ENCODE measurements at regions of chr6 and their contacts with region 1.

Region 1: DNA sequence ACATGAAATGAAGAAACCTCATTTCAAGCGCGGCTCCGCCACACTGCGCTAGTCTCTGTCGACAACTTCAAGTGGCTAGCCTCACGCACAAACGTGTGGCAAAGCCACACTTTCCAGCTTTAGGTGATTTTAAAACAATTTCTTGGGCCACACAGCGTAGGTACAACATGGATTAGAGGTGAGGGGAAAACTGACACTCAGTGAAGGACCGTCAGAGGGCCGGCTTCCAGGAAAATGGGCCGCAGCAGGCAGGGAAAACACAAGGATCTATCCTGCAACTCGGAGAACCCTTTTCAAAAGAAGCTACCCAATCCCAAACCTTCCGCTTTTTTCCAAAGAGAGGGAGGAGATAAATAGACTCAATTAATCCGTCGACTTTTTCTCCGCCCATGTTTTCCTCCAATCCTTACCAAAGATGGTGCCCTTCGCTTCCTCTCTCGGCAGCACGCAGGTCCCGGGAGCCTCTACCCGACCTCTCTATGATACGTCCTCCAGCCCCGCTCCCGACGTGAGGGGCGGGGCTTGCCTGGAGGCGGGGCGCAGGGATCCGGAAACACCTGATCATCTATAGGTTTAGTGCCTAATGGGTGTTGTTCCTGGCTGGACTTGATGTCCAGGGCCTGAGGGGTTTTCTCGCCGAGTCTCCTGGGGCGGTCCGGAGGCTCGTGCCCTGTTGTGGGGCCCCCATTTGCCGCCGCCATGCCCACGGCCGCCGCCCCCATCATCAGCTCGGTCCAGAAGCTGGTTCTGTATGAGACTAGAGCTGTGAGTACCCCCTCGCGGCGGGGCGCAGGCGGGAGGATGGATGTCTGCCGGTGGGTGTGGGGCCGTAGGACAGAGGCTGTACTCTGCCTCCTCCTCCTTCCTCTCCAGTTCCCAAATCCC is at the starts of genes AK9 and FIG4:
- DNase-seq: peak; percentile 72 to 88 (median 83)
- ATAC-seq: peak; percentile 98
- H3K4me3 ChIP-seq: peak within 1 kb of the TSS; percentile 98
- H3K4me3 Mint-ChIP-seq: peak within 1 kb of the TSS; percentile 91 to 100 (median 96)
- H3K27ac ChIP-seq: peak within 1 kb of the TSS; percentile 74
- H3K27ac Mint-ChIP-seq: peak within 1 kb of the TSS; percentile 92 to 99 (median 96)
- H3K4me1 ChIP-seq: peaks cover 12 to 13% of the 10 kb centered on the region in 2 donors
- H3K4me1 Mint-ChIP-seq: peaks cover 21 to 48% (median 34%) of the 10 kb centered on the region in 7 donors
- H3K27me3 ChIP-seq: no peaks in the 10 kb centered on the region
- H3K27me3 Mint-ChIP-seq: peaks cover 0 to 13% (median 0%) of the 10 kb centered on the region in 5 donors
- total RNA-seq, gene AK9: 5.8 to 19.5 (median 11.5) TPM
- total RNA-seq, gene FIG4: 6.8 to 16.5 (median 13.0) TPM

Region 2: DNA sequence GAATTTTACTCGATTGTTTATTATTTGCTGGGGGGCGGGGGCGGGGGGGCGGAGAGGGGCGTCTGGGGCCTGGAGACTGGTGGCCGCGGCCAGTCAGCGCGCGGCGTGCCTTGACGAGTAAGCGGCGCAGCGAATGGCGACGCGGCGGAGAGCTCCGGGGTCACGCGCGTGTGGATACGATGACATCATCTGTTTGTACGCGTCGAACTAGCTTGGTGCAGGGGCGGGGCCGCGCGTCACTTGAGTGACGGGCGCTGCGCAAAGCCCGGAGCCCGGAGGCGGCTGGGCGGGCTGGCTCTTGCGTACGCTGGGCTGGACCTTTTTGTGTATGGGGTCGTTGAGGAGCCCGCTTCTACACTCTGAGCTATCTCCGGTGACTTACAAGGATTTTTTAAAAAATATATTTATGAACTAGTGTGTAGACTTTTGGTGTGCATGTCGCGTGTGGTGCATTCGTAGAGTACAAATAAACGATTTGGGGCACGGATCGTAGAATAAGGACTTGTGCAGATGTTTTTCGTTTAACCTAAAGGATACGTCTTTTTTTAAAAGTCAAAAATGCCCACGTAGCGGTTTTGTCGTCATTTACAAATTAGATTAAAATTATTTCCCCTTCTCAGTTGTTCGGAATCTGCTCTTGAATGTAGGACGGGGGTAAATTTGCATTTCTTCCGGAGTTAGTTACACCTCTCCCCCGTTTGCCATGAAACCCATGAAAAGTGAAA is 1132.4 kb before region 1 on chr6:
- CTCF ChIA-PET with region 1: no interaction called
- POLR2A ChIA-PET with region 1: interaction called, 4 read pairs
- intact Hi-C with region 1: loop called in 1 of 2 experiments (anchors 1 kb)
- DNase-seq: peak; percentile 91 to 98 (median 97)
- ATAC-seq: peak; percentile 75
- H3K4me3 ChIP-seq: peak overlapping the region; percentile 75
- H3K4me3 Mint-ChIP-seq: peak overlapping the region; percentile 88 to 98 (median 97)
- H3K27ac ChIP-seq: peak overlapping the region; percentile 100
- H3K27ac Mint-ChIP-seq: peak overlapping the region; percentile 87 to 99 (median 97)
- H3K4me1 ChIP-seq: peaks cover 12 to 13% of the 10 kb centered on the region in 2 donors
- H3K4me1 Mint-ChIP-seq: peaks cover 16 to 28% (median 20%) of the 10 kb centered on the region in 7 donors
- H3K27me3 ChIP-seq: no peaks in the 10 kb centered on the region
- H3K27me3 Mint-ChIP-seq: peaks cover 0 to 55% (median 6%) of the 10 kb centered on the region in 5 donors

Region 3: GRCh38 chr6:109440331-109441068 is 250.5 kb before region 1 on chr6 and contains the starts of genes PPIL6 and SMPD2:
- CTCF ChIA-PET with region 1: interaction called, 4 read pairs
- POLR2A ChIA-PET with region 1: interaction called, 3 read pairs
- intact Hi-C with region 1: loop called (anchors 1 kb)
- DNase-seq: peak; percentile 63 to 85 (median 77)
- ATAC-seq: peak; percentile 91
- H3K4me3 ChIP-seq: peak within 1 kb of the TSS; percentile 65
- H3K4me3 Mint-ChIP-seq: peak within 1 kb of the TSS; percentile 90 to 95 (median 94)
- H3K27ac ChIP-seq: peak within 1 kb of the TSS; percentile 98
- H3K27ac Mint-ChIP-seq: peak within 1 kb of the TSS; percentile 87 to 97 (median 93)
- H3K4me1 ChIP-seq: peaks cover 11% of the 10 kb centered on the region in 2 donors
- H3K4me1 Mint-ChIP-seq: peaks cover 10 to 32% (median 21%) of the 10 kb centered on the region in 7 donors
- H3K27me3 ChIP-seq: no peaks in the 10 kb centered on the region
- H3K27me3 Mint-ChIP-seq: peaks cover 0 to 2% (median 0%) of the 10 kb centered on the region in 5 donors
- total RNA-seq, gene PPIL6: 0.13 to 1.9 (median 0.40) TPM in 4 of 5 experiments, not detected in the other
- total RNA-seq, gene SMPD2: 16.9 to 33.7 (median 19.6) TPM

Region 4: GRCh38 chr6:109595998-109596397 is 95.0 kb before region 1 on chr6:
- CTCF ChIA-PET with region 1: no interaction called
- POLR2A ChIA-PET with region 1: no interaction called
- intact Hi-C with region 1: loop called in 1 of 2 experiments (anchors 5 kb)
- DNase-seq: peak in 5 of 9 donors; percentile 26 to 45 (median 35)
- ATAC-seq: peak; percentile 44
- H3K4me3 ChIP-seq: no peak overlapping the region
- H3K4me3 Mint-ChIP-seq: no peak overlapping the region
- H3K27ac ChIP-seq: no peak overlapping the region
- H3K27ac Mint-ChIP-seq: no peak overlapping the region
- H3K4me1 ChIP-seq: no peaks in the 10 kb centered on the region
- H3K4me1 Mint-ChIP-seq: peaks cover 2 to 13% (median 5%) of the 10 kb centered on the region in 7 donors
- H3K27me3 ChIP-seq: no peaks in the 10 kb centered on the region
- H3K27me3 Mint-ChIP-seq: no peaks in the 10 kb centered on the region

Region 5: GRCh38 chr6:110389689-110390382 is 698.9 kb after region 1 on chr6:
- CTCF ChIA-PET with region 1: no interaction called
- POLR2A ChIA-PET with region 1: no interaction called
- intact Hi-C with region 1: loop called in 1 of 2 experiments (anchors 5 kb)
- DNase-seq: no peak
- ATAC-seq: peak; percentile 67
- H3K4me3 ChIP-seq: no peak overlapping the region
- H3K4me3 Mint-ChIP-seq: peak overlapping the region in 1 of 10 donors; percentile 32
- H3K27ac ChIP-seq: no peak overlapping the region
- H3K27ac Mint-ChIP-seq: peak overlapping the region in 6 of 9 donors; percentile 7 to 85 (median 54)
- H3K4me1 ChIP-seq: peaks cover 0 to 3% of the 10 kb centered on the region in 2 donors
- H3K4me1 Mint-ChIP-seq: peaks cover 9 to 27% (median 23%) of the 10 kb centered on the region in 7 donors
- H3K27me3 ChIP-seq: no peaks in the 10 kb centered on the region
- H3K27me3 Mint-ChIP-seq: no peaks in the 10 kb centered on the region

Region 6: GRCh38 chr6:111259089-111259831 is 1568.3 kb after region 1 on chr6:
- CTCF ChIA-PET with region 1: no interaction called
- POLR2A ChIA-PET with region 1: no interaction called
- intact Hi-C with region 1: loop called in 1 of 2 experiments (anchors 2 kb)
- DNase-seq: peak; percentile 98 to 99 (median 99)
- ATAC-seq: peak; percentile 99
- H3K4me3 ChIP-seq: peak overlapping the region; percentile 89
- H3K4me3 Mint-ChIP-seq: peak overlapping the region; percentile 75 to 90 (median 86)
- H3K27ac ChIP-seq: peak overlapping the region; percentile 87
- H3K27ac Mint-ChIP-seq: peak overlapping the region; percentile 83 to 97 (median 92)
- H3K4me1 ChIP-seq: peaks cover 6 to 17% of the 10 kb centered on the region in 2 donors
- H3K4me1 Mint-ChIP-seq: peaks cover 12 to 37% (median 30%) of the 10 kb centered on the region in 7 donors
- H3K27me3 ChIP-seq: no peaks in the 10 kb centered on the region
- H3K27me3 Mint-ChIP-seq: peaks cover 0 to 18% (median 0%) of the 10 kb centered on the region in 5 donors

Measured in naive thymus-derived CD4-positive, alpha-beta T cell (primary cell).